ENCODE measurements at regions of chr5 and their contacts with region 1.

Region 1: DNA sequence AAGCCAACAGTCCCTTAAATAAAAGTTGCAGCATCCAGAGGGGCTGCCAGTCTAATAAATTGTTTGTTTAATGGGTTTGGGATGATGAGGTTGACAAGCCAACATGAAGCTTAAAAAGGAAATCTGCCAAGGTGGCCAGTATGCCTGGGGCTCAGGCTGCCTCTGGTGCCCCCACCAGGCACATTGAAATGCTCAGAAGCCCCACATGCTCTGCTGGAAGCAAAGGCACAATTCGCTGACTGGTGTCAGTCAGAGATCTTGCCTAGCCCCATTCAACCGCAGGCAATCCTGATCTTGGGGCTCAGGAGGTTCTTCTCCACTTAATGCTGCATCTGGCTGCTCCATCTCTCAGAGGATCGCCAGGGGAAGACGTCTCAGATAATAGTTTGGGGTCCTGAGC is 44.2 kb upstream of the TCERG1 start:
- DNase-seq: no peak
- H3K4me3 ChIP-seq: no peak overlapping the region
- H3K27ac ChIP-seq: no peak overlapping the region
- H3K4me1 ChIP-seq: no peaks in the 10 kb centered on the region
- H3K27me3 ChIP-seq: peaks cover 17% of the 10 kb centered on the region
- CTCF ChIP-seq: no peak
- EP300 ChIP-seq: no peak
- POLR2A ChIP-seq: no peak

Region 2: GRCh38 chr5:146301626-146302025 is 101.3 kb before region 1 on chr5:
- in situ Hi-C with region 1: no loop called
- intact Hi-C with region 1: loop called (anchors 5 kb)
- DNase-seq: no peak
- H3K4me3 ChIP-seq: no peak overlapping the region
- H3K27ac ChIP-seq: no peak overlapping the region
- H3K4me1 ChIP-seq: no peaks in the 10 kb centered on the region
- H3K27me3 ChIP-seq: no peaks in the 10 kb centered on the region
- CTCF ChIP-seq: no peak
- EP300 ChIP-seq: no peak
- POLR2A ChIP-seq: no peak

Measured in transverse colon (tissue), 4 donors.